ENCODE measurements at regions of chr2 and their contacts with region 1.

Region 1: DNA sequence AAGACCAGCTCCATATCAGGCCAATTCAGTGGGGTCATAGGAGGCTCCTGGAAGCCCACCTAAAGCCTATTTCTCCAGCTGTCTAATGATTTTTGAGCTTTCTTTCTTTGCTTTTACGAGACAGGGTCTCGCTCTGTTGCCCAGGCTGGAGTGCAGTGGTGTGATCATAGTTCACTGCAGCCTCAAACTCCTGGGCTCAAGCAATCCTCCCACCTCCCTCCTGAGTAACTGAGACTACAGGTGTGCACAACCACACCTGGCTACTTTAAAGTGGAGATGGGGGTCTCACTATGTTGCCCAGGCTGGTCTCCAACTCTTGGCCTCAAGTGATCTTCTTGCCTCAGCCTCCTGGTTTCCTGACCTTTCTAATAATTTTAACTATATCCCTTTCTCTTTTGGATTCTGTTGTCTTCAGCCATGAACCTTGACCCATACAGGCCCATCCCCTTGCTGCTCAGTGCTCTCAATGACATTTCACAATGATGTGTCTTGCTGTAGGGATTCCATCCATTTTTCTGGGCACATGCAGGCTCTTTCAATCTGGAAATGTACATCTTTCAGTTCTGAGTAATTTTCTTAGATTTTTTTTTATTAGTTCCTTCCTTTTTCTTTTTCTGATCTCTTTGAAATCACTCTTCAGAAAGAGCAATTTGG is 29.7 kb downstream of the GNLY start:
- DNase-seq: no peak
- ATAC-seq: no peak
- H3K4me3 Mint-ChIP-seq: no peak overlapping the region
- H3K27ac Mint-ChIP-seq: no peak overlapping the region
- H3K4me1 Mint-ChIP-seq: no peaks in the 10 kb centered on the region
- H3K27me3 Mint-ChIP-seq: peaks cover 19% of the 10 kb centered on the region

Region 2: DNA sequence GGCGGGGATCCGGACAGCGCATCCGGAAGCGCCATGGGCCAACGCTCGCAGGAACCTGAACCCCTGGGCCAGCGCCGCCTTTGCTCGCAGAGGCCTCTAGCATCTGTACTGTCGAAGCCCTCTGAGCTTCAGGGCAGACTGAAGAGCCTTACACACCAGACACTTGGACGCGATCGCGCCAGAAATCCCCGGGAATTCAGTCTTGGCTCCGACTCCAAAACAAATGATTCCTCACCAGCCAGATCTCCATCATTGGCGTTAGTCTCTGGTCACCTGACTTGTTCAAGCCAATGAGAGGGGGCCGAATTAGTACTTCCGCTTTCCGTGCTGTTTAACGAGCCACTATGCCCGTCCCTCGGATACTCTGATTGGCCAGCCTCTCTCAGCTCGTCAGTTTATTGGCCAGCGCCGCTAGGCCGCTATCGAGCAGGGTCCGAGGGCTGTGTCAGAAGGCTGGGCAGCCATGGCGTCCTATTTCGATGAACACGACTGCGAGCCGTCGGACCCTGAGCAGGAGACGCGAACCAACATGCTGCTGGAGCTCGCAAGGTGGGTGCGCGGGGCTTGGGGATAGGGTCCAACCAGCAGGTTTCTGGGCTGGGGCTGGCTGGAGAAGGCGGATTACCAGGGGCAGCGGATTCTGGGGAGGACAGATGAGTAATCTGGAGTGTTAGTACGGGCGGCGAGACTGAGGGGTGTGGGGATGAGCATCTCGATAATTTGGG is 128.4 kb before region 1 on chr2 and contains the start of gene RNF181:
- CTCF ChIA-PET with region 1: no interaction called
- POLR2A ChIA-PET with region 1: no interaction called
- DNase-seq: peak; percentile 96
- ATAC-seq: peak; percentile 100
- H3K4me3 Mint-ChIP-seq: peak within 1 kb of the TSS; percentile 100
- H3K27ac Mint-ChIP-seq: peak within 1 kb of the TSS; percentile 97
- H3K4me1 Mint-ChIP-seq: peaks cover 37% of the 10 kb centered on the region
- H3K27me3 Mint-ChIP-seq: no peaks in the 10 kb centered on the region
- total RNA-seq, gene RNF181: 91.0 to 104 TPM

Region 3: DNA sequence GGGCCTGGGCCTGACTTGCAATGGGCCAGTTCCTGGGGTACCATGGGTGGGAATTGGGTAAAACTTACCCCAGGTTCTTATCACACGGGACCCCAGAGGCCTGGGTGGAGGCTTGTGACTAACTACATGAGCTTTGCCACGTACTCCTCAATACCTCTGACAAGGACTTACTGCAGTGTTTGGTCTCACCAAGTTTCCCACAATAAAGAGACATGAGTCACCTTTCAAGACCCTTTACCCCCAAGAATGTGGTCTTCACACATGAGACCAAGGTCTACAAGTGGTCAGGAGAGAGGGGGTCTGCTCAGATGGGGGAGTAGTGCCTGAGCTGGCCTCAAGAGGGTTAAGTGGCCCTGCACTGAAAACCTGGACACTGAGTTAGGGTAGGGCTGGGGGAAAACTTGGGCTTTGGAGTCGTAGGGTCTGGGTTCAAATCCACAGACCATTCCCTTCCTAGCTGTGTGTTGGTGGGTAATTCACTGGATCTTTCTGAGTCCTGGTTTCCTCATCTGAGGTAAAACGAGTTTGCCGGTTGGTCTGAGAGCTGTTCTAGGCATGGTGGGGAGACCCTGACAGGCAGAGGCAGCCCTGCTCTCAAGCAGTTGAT is 31.7 kb before region 1 on chr2:
- CTCF ChIA-PET with region 1: no interaction called
- POLR2A ChIA-PET with region 1: no interaction called
- DNase-seq: no peak
- ATAC-seq: no peak
- H3K4me3 Mint-ChIP-seq: no peak overlapping the region
- H3K27ac Mint-ChIP-seq: no peak overlapping the region
- H3K4me1 Mint-ChIP-seq: peaks cover 27% of the 10 kb centered on the region
- H3K27me3 Mint-ChIP-seq: peaks cover 3% of the 10 kb centered on the region

Region 4: GRCh38 chr2:85813982-85814801 is 90.4 kb after region 1 on chr2:
- CTCF ChIA-PET with region 1: interaction called, 97 read pairs
- POLR2A ChIA-PET with region 1: interaction called, 3 read pairs
- DNase-seq: peak; percentile 89
- ATAC-seq: peak; percentile 95
- H3K4me3 Mint-ChIP-seq: no peak overlapping the region
- H3K27ac Mint-ChIP-seq: no peak overlapping the region
- H3K4me1 Mint-ChIP-seq: no peaks in the 10 kb centered on the region
- H3K27me3 Mint-ChIP-seq: peaks cover 15% of the 10 kb centered on the region